ENCODE measurements at regions of chr21 and their contacts with region 1.

Region 1: GRCh38 chr21:36589355-36589971 is 109.5 kb upstream of the SIM2 start:
- DNase-seq: peak; percentile 56
- ATAC-seq: peak; percentile 85
- H3K4me3 Mint-ChIP-seq: no peak overlapping the region
- H3K27ac Mint-ChIP-seq: no peak overlapping the region
- H3K4me1 Mint-ChIP-seq: peaks cover 5% of the 10 kb centered on the region
- H3K27me3 Mint-ChIP-seq: no peaks in the 10 kb centered on the region
- CTCF ChIP-seq: peak; percentile 62

Region 2: GRCh38 chr21:36403713-36404112 is 185.8 kb before region 1 on chr21:
- CTCF ChIA-PET with region 1: no interaction called
- POLR2A ChIA-PET with region 1: no interaction called
- intact Hi-C with region 1: no loop called
- DNase-seq: no peak
- ATAC-seq: no peak
- H3K4me3 Mint-ChIP-seq: no peak overlapping the region
- H3K27ac Mint-ChIP-seq: no peak overlapping the region
- H3K4me1 Mint-ChIP-seq: no peaks in the 10 kb centered on the region
- H3K27me3 Mint-ChIP-seq: no peaks in the 10 kb centered on the region
- CTCF ChIP-seq: no peak

Region 3: GRCh38 chr21:36504067-36505058 is 85.1 kb before region 1 on chr21:
- CTCF ChIA-PET with region 1: interaction called, 4 read pairs
- POLR2A ChIA-PET with region 1: no interaction called
- intact Hi-C with region 1: loop called (anchors 5 kb)
- DNase-seq: peak; percentile 52
- ATAC-seq: no peak
- H3K4me3 Mint-ChIP-seq: no peak overlapping the region
- H3K27ac Mint-ChIP-seq: no peak overlapping the region
- H3K4me1 Mint-ChIP-seq: no peaks in the 10 kb centered on the region
- H3K27me3 Mint-ChIP-seq: no peaks in the 10 kb centered on the region
- CTCF ChIP-seq: peak; percentile 96

Measured in activated CD8-positive, alpha-beta T cell treated with anti-CD3 and anti-CD28 coated beads for 36 hours (primary cell).